ENCODE measurements at regions of chr17 and their contacts with region 1.

Region 1: GRCh38 chr17:42112552-42113176 is at the start of gene DHX58:
- DNase-seq: peak; percentile 79 to 90 (median 84)
- ATAC-seq: peak; percentile 88
- H3K4me3 ChIP-seq: peak within 1 kb of the TSS; percentile 17 to 31
- H3K27ac ChIP-seq: peak within 1 kb of the TSS; percentile 79 to 90 (median 84)
- H3K4me1 ChIP-seq: peaks cover 35% of the 10 kb centered on the region
- H3K27me3 ChIP-seq: no peaks in the 10 kb centered on the region
- CTCF ChIP-seq: no peak
- POLR2A ChIP-seq: peak; percentile 31 to 73 (median 67)
- total RNA-seq, gene DHX58: 5.7 to 19.1 TPM

Region 2: DNA sequence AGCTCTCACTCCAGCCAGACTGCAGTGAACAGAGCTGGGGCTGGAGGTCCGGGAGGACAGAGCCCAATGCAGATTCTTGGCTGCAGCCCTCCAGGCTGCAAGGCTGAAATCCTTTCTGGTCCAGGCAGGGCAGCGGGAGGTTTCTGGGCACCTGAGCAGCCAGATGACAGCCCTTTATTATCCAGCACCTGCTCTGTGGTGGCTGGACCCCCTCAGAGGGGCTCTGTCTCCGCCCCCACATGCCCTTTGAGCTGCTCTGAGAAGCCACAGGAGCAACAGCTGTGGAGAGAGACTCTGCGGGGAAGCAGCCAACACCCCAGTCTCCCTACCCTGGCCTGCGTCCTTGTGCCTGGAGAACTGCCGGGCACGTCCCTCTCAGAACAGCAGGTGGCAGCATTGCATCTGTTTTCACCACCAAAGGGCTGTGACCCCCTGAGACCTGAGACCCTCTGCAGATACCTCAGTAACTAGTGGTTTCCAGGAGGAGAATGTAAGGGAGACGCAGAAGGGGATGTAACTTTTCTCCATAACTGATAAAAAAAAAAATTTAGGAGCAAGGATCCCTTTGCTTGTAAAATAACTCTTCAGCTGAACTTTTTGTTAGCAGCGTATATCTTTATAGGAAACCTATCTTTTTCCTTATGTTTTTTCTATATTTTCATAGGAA is 149.8 kb before region 1 on chr17:
- intact Hi-C with region 1: loop called (anchors 5 kb)
- DNase-seq: peak; percentile 84 to 92 (median 88)
- ATAC-seq: peak; percentile 19
- H3K4me3 ChIP-seq: no peak overlapping the region
- H3K27ac ChIP-seq: peak overlapping the region; percentile 70 to 85 (median 76)
- H3K4me1 ChIP-seq: peaks cover 69% of the 10 kb centered on the region
- H3K27me3 ChIP-seq: no peaks in the 10 kb centered on the region
- CTCF ChIP-seq: peak; percentile 75 to 91 (median 83)
- POLR2A ChIP-seq: no peak

Region 3: GRCh38 chr17:41976142-41976768 is 136.4 kb before region 1 on chr17:
- intact Hi-C with region 1: no loop called
- DNase-seq: no peak
- ATAC-seq: no peak
- H3K4me3 ChIP-seq: no peak overlapping the region
- H3K27ac ChIP-seq: peak overlapping the region in 1 of 4 donors; percentile 6
- H3K4me1 ChIP-seq: peaks cover 41% of the 10 kb centered on the region
- H3K27me3 ChIP-seq: no peaks in the 10 kb centered on the region
- CTCF ChIP-seq: no peak
- POLR2A ChIP-seq: no peak

Region 4: DNA sequence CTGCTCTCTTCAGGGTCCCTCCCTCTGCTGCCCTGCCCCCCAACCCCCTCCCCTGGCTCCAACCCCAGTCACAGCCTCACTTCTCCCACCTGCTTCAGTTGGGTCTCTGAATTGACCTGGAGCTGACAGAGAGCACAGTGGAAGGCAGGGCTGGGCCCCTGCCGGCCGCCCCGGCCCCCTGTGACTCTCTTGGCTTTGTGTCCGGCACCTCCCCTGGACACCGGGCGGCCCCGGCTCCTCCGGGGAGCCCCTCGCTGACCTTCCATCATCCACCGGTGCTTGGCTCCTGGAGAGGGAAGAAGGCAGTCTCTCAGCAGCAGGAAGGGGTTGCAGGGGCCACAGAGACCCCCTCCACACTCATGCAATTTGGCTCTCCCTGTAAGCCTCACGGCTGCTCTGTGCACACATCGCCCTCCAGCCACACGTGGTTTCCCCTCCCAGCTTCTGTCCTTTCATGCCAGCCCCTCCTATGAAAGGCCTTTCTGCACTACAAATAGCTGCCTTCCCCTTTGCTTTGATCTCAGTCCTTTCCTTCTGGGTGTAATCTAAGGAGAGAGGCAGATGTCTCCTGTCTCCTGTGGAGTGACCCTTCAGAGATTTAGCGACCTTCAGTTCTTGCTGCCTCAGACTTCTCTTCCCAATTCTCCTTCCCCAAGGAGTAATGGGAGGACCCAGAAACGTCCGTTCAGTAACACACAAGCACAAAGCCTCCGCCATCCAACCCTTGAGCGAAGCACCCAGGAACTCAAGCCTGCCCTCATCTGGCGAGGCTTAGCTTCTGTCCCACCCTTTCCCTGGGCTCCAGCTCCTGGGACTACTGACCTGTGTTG is 84.5 kb before region 1 on chr17:
- intact Hi-C with region 1: loop called (anchors 5 kb)
- DNase-seq: peak in 3 of 4 donors; percentile 30 to 45 (median 43)
- ATAC-seq: no peak
- H3K4me3 ChIP-seq: no peak overlapping the region
- H3K27ac ChIP-seq: no peak overlapping the region
- H3K4me1 ChIP-seq: peaks cover 14% of the 10 kb centered on the region
- H3K27me3 ChIP-seq: no peaks in the 10 kb centered on the region
- CTCF ChIP-seq: peak in 3 of 7 experiments; percentile 6 to 37 (median 16)
- POLR2A ChIP-seq: no peak

Region 5: GRCh38 chr17:42072323-42073187 is 40.1 kb before region 1 on chr17:
- intact Hi-C with region 1: loop called (anchors 5 kb)
- DNase-seq: peak; percentile 25 to 62 (median 38)
- ATAC-seq: peak; percentile 53
- H3K4me3 ChIP-seq: no peak overlapping the region
- H3K27ac ChIP-seq: no peak overlapping the region
- H3K4me1 ChIP-seq: peaks cover 10% of the 10 kb centered on the region
- H3K27me3 ChIP-seq: peaks cover 0 to 13% of the 10 kb centered on the region in 2 donors
- CTCF ChIP-seq: peak in 2 of 7 experiments; percentile 32 to 44
- POLR2A ChIP-seq: no peak

Measured in body of pancreas (tissue), 4 donors.